CD8-positive, alpha-beta memory T cell (primary cell): ENCODE measurements at regions of chr10 and their contacts with region 1.

Region 1: GRCh38 chr10:61750929-61751471 is 88.3 kb downstream of the CABCOCO1 start:
- DNase-seq: peak; percentile 29 to 78 (median 50)
- H3K4me3 ChIP-seq: no peak overlapping the region
- H3K4me3 Mint-ChIP-seq: peak overlapping the region in 3 of 7 donors; percentile 6 to 46 (median 34)
- H3K27ac ChIP-seq: no peak overlapping the region
- H3K27ac Mint-ChIP-seq: peak overlapping the region in 1 of 8 donors; percentile 92
- H3K4me1 ChIP-seq: peaks cover 19% of the 10 kb centered on the region
- H3K4me1 Mint-ChIP-seq: peaks cover 24 to 29% (median 28%) of the 10 kb centered on the region in 3 donors
- H3K27me3 ChIP-seq: no peaks in the 10 kb centered on the region
- H3K27me3 Mint-ChIP-seq: no peaks in the 10 kb centered on the region

Region 2: DNA sequence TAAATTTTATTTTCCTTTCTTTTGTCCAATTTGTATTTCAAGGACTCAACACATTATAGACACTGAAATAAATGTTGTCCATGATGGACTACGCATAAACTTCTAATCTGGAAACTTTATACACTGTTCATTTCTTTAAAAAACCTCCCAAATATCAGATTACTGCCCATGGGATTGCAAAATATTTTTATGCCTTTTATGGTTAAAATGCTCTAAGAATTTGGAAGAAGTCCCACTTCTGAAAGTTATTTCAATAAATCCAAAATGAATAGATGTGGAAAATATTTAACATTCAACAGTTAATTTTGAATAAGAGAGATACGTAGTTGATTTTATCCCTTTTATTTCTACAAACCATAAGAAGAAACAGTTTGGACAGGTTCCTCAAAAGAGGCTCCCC is 42.2 kb before region 1 on chr10:
- CTCF ChIA-PET with region 1: no interaction called
- POLR2A ChIA-PET with region 1: no interaction called
- DNase-seq: no peak
- H3K4me3 ChIP-seq: no peak overlapping the region
- H3K4me3 Mint-ChIP-seq: no peak overlapping the region
- H3K27ac ChIP-seq: no peak overlapping the region
- H3K27ac Mint-ChIP-seq: no peak overlapping the region
- H3K4me1 ChIP-seq: no peaks in the 10 kb centered on the region
- H3K4me1 Mint-ChIP-seq: no peaks in the 10 kb centered on the region
- H3K27me3 ChIP-seq: no peaks in the 10 kb centered on the region
- H3K27me3 Mint-ChIP-seq: peaks cover 7 to 16% of the 10 kb centered on the region in 2 donors

Region 3: DNA sequence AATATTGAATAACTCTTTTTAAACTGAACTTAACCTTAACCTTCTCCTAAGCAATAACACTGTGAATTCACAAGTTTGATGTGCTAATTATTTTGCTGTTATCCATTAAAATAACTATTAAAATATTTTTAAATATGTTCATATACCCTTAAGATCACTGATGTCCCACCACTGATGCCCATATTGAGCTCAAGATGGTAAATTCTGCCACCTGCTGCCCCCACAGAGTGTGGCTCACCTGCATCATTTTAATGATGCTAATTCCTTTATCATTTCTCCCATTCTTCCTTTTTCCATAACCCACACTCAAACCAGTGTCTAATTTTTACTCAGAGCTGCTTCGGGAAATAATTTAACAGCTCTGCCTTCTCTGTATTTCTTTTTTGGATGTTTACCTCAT is 68.2 kb after region 1 on chr10:
- CTCF ChIA-PET with region 1: interaction called, 13 read pairs
- POLR2A ChIA-PET with region 1: no interaction called
- DNase-seq: no peak
- H3K4me3 ChIP-seq: no peak overlapping the region
- H3K4me3 Mint-ChIP-seq: no peak overlapping the region
- H3K27ac ChIP-seq: no peak overlapping the region
- H3K27ac Mint-ChIP-seq: no peak overlapping the region
- H3K4me1 ChIP-seq: no peaks in the 10 kb centered on the region
- H3K4me1 Mint-ChIP-seq: no peaks in the 10 kb centered on the region
- H3K27me3 ChIP-seq: no peaks in the 10 kb centered on the region
- H3K27me3 Mint-ChIP-seq: no peaks in the 10 kb centered on the region

Region 4: DNA sequence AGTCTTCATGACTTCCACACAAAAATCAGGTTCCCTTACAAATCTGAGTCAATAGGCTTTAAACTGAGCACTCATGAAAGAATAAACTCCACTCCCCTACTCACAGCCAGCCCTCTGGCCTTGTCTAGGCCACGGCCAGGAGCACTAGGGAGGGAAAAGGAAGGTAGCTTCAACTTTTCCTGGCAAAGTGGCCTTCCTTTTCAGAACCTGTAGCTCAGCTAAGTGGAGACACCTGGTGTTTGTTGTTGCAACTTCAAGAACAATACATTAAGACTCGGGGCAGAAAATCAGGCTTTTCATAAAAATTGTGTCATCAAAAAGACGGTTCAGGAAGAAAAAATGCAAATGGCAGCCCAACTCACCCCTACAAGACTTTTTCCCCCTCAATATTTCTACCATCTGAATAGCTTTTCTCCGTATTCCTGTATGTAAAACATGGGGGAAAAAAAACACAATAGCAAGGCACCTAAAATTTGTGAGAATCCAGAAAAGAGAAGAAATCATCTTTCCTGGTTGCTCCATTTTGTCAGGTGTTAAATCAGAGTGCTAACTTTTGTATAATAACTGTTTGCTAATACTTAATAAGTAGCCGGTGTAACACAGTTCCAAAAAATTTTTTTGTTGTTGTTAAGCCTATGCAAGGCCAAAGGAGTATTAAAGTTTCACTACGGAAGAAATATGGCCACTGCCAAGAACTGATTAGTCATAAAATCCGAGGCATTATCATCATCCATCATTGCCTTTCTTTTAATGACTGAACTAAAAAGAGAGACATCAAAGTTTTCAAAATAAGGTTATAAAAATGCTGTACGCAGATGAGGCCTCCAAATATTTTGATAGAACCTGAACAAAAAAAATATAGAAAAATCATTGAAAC is 84.3 kb after region 1 on chr10:
- CTCF ChIA-PET with region 1: interaction called, 18 read pairs
- POLR2A ChIA-PET with region 1: no interaction called
- DNase-seq: no peak
- H3K4me3 ChIP-seq: no peak overlapping the region
- H3K4me3 Mint-ChIP-seq: peak overlapping the region in 1 of 7 donors; percentile 10
- H3K27ac ChIP-seq: no peak overlapping the region
- H3K27ac Mint-ChIP-seq: peak overlapping the region in 2 of 8 donors; percentile 43 to 45
- H3K4me1 ChIP-seq: no peaks in the 10 kb centered on the region
- H3K4me1 Mint-ChIP-seq: peaks cover 0 to 17% (median 4%) of the 10 kb centered on the region in 3 donors
- H3K27me3 ChIP-seq: no peaks in the 10 kb centered on the region
- H3K27me3 Mint-ChIP-seq: peaks cover 0 to 3% of the 10 kb centered on the region in 2 donors

Region 5: DNA sequence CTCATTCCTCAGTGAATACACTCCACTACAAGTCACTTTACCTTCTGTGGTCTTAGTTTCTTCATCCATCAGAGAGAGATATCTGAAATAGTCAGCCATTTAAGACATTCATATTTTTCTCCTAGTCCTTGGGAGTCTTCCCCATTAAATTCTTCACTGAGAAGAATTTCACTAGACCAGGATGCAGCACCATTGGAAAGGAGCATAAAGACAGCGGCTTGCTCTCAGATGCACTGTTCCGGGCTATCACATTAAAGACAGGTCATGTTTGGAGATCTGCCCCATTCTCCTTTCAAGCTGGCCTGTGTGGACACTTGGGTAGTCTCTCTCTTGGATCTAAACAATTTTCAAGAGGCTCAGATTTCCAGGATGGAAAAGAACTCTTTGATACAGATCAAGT is 118.3 kb after region 1 on chr10:
- CTCF ChIA-PET with region 1: interaction called, 29 read pairs
- POLR2A ChIA-PET with region 1: no interaction called
- DNase-seq: no peak
- H3K4me3 ChIP-seq: no peak overlapping the region
- H3K4me3 Mint-ChIP-seq: peak overlapping the region in 2 of 7 donors; percentile 12 to 35
- H3K27ac ChIP-seq: no peak overlapping the region
- H3K27ac Mint-ChIP-seq: no peak overlapping the region
- H3K4me1 ChIP-seq: peaks cover 5% of the 10 kb centered on the region
- H3K4me1 Mint-ChIP-seq: peaks cover 3 to 7% (median 5%) of the 10 kb centered on the region in 3 donors
- H3K27me3 ChIP-seq: no peaks in the 10 kb centered on the region
- H3K27me3 Mint-ChIP-seq: peaks cover 0 to 8% of the 10 kb centered on the region in 2 donors